ENCODE measurements at regions of chr5 and their contacts with region 1.

Region 1: GRCh38 chr5:92758552-92758951 is 822.5 kb downstream of the NR2F1-AS1 start:
- DNase-seq: peak; percentile 70
- H3K4me3 ChIP-seq: no peak overlapping the region
- H3K27ac ChIP-seq: no peak overlapping the region
- H3K4me1 ChIP-seq: peaks cover 7% of the 10 kb centered on the region
- H3K27me3 ChIP-seq: no peaks in the 10 kb centered on the region
- CTCF ChIP-seq: no peak

Region 2: DNA sequence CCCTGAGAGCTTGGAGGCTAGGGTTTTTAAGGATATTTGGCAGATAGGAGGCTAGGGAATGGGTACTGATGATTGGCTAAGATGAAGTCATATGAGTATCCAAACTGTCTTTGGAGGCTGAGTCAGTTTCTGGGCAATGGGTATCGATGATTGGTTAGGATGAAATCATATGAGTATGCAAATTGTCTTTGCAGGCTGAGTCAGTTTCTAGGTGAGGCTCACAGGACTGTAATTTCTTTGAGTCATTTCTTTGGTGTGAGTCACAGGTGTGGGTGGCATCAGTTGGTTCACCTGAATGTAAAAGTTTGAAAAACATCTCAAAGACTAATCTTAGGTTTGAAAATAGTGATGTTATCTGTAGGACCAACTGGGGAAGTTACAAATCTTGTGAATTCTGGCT is 245.5 kb before region 1 on chr5:
- CTCF ChIA-PET with region 1: no interaction called
- dilution Hi-C with region 1: no loop called
- in situ Hi-C with region 1: no loop called
- intact Hi-C with region 1: loop called (anchors 1 kb)
- DNase-seq: peak; percentile 89
- H3K4me3 ChIP-seq: no peak overlapping the region
- H3K27ac ChIP-seq: peak overlapping the region; percentile 86
- H3K4me1 ChIP-seq: no peaks in the 10 kb centered on the region
- H3K27me3 ChIP-seq: no peaks in the 10 kb centered on the region
- CTCF ChIP-seq: no peak

Measured in mammary epithelial cell (primary cell).